Activated T-helper 1 cell treated with anti-CD3 and anti-CD28 coated beads, Interleukin-12 subunit alpha, Interleukin-12 subunit beta, Interleukin-2, Interleukin-4 antibody, amounts not matched to agents 30 ng/mL and 10 ng/mL and 1 ng/mL, durations not matched to agents 14 hours and 24 hours and 36 hours (primary cell): ENCODE measurements at regions of chr18 and their contacts with region 1.

Region 1: GRCh38 chr18:76374330-76375281 is 120.4 kb downstream of the ZNF516 start:
- DNase-seq: peak; percentile 50
- H3K4me3 Mint-ChIP-seq: peak overlapping the region; percentile 8
- H3K27ac Mint-ChIP-seq: peak overlapping the region; percentile 70
- H3K4me1 Mint-ChIP-seq: peaks cover 40% of the 10 kb centered on the region
- H3K27me3 Mint-ChIP-seq: peaks cover 12% of the 10 kb centered on the region

Region 2: DNA sequence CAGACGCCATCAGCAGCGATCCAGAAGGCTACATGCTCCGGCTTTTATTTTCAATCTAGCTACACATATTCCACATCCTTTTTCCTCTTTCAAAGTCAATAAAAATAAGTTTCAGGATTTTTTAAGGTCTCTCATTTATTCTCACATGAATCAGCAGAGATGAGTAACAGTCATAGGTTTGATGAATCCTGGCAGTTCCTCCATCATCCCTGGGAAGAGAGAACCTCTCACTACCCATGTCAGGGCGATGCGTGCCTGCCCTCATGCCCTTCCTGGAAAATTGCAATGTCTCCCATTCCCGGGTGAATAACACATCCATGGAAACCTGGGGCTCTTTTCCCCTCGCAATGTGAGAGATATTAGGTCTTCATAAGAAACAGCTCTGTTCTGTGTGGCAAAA is 646.0 kb before region 1 on chr18:
- intact Hi-C with region 1: no loop called
- DNase-seq: no peak
- H3K4me3 Mint-ChIP-seq: no peak overlapping the region
- H3K27ac Mint-ChIP-seq: no peak overlapping the region
- H3K4me1 Mint-ChIP-seq: no peaks in the 10 kb centered on the region
- H3K27me3 Mint-ChIP-seq: no peaks in the 10 kb centered on the region

Region 3: GRCh38 chr18:76051396-76052226 is 323.0 kb before region 1 on chr18:
- intact Hi-C with region 1: no loop called
- DNase-seq: no peak
- H3K4me3 Mint-ChIP-seq: no peak overlapping the region
- H3K27ac Mint-ChIP-seq: no peak overlapping the region
- H3K4me1 Mint-ChIP-seq: no peaks in the 10 kb centered on the region
- H3K27me3 Mint-ChIP-seq: no peaks in the 10 kb centered on the region

Region 4: GRCh38 chr18:76364282-76365259 is 10.0 kb before region 1 on chr18:
- intact Hi-C with region 1: loop called (anchors 1 kb)
- DNase-seq: no peak
- H3K4me3 Mint-ChIP-seq: peak overlapping the region; percentile 19
- H3K27ac Mint-ChIP-seq: no peak overlapping the region
- H3K4me1 Mint-ChIP-seq: peaks cover 10% of the 10 kb centered on the region
- H3K27me3 Mint-ChIP-seq: peaks cover 17% of the 10 kb centered on the region

Region 5: DNA sequence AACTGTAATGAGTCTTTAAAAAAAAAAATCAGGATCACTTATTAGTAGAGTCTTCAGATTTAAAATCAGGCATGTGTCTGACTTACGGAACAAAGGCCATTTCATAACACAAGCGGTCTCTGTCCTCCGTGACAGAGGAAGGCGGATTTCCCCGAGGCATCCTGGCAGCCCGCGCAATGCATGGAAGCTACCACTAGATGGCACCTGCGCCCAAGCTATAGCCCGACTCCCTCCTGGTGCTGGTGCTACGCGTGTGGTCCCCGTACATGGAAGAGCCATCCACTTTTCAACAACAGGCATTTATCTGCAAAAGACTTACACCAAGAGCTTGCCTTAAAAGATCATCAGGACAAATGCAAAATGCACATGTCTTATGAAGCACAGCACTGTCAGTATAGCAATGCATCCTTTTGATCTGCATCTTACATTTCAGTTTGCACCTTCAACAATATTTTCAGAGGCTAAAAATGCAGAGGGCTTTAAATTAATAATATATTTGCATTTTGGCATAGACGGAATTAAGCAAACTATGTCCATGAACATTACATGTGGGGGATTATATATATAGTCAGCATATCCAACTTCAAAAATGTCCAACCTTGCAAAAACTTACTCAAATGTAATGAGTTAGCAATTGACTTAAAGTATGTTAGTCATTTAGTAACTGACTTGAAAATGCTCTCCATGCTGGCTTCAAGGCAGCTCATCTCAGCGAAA is 24.4 kb after region 1 on chr18:
- intact Hi-C with region 1: no loop called
- DNase-seq: peak; percentile 61
- H3K4me3 Mint-ChIP-seq: no peak overlapping the region
- H3K27ac Mint-ChIP-seq: no peak overlapping the region
- H3K4me1 Mint-ChIP-seq: peaks cover 6% of the 10 kb centered on the region
- H3K27me3 Mint-ChIP-seq: peaks cover 18% of the 10 kb centered on the region

Region 6: GRCh38 chr18:76410660-76411417 is 36.2 kb after region 1 on chr18:
- intact Hi-C with region 1: loop called (anchors 2 kb)
- DNase-seq: no peak
- H3K4me3 Mint-ChIP-seq: no peak overlapping the region
- H3K27ac Mint-ChIP-seq: peak overlapping the region; percentile 9
- H3K4me1 Mint-ChIP-seq: peaks cover 12% of the 10 kb centered on the region
- H3K27me3 Mint-ChIP-seq: peaks cover 21% of the 10 kb centered on the region